ENCODE measurements at regions of chrX and their contacts with region 1.

Region 1: DNA sequence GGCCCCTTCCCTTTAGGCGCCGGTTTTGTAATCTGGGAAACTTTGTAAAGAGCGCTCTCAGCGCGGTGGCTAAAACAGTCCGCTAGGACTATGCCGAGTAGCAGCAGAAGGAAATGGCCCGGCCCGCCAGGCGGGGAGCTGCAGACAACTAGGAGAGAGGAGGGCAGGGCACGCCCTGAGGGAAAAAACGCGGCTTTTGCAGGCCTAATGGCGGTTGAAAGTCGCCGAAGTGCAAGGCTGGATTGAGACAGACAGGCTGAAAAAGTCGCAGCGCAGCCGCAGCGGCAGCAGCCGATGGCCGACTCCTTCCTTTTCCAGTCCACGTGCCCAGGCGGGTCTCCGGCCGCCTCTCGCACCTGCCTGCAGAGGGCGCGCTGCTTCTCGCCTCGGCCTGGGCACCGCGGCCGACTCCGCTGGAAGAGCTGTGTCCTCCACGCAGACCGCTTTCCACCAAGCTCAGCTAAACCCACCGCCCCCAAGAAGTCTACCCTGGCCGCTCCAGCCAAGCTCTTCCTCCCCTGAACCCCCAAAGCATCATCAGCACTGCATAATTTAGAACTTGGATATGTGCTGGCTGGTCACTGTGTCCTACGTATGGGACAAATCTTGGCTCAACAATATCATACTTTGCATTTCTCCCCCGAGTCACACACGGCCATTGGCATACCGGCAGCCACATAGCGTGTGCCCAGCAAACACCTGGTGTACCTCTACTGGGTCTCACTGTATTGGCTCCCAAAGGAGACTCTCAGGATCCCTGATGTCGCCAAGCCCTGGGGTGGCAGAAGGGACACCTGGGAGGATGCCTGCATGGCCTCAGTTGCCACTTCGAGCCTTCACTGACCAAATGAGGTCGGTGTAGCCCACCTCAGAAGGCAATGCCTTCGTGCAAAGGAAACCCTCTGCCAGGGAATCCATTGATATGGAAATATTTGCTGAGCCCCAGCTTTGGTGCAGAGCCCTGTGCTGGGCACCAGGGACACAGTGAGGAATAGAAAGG is 14.5 kb downstream of the SLC25A5 start:
- DNase-seq: peak; percentile 52
- H3K4me3 Mint-ChIP-seq: peak overlapping the region; percentile 63
- H3K27ac Mint-ChIP-seq: peak overlapping the region; percentile 86
- H3K4me1 Mint-ChIP-seq: peaks cover 11% of the 10 kb centered on the region
- H3K27me3 Mint-ChIP-seq: no peaks in the 10 kb centered on the region

Region 2: GRCh38 chrX:119468930-119469635 is 13.7 kb before region 1 on chrX:
- CTCF ChIA-PET with region 1: interaction called, 14 read pairs
- POLR2A ChIA-PET with region 1: interaction called, 3 read pairs
- DNase-seq: peak; percentile 88
- H3K4me3 Mint-ChIP-seq: peak overlapping the region; percentile 85
- H3K27ac Mint-ChIP-seq: peak overlapping the region; percentile 94
- H3K4me1 Mint-ChIP-seq: peaks cover 22% of the 10 kb centered on the region
- H3K27me3 Mint-ChIP-seq: no peaks in the 10 kb centered on the region

Measured in activated CD4-positive, alpha-beta T cell treated with anti-CD3 and anti-CD28 coated beads, Interleukin-2, amount 10 ng/mL, durations not matched to agents 7 days and 5 days (primary cell).